Sigmoid colon (tissue), 7 donors: ENCODE measurements at regions of chr2 and their contacts with region 1.

Region 1: GRCh38 chr2:200864176-200864976 is at the start of gene CLK1:
- DNase-seq: peak; percentile 98
- H3K4me3 ChIP-seq: peak within 1 kb of the TSS; percentile 90 to 100 (median 96)
- H3K27ac ChIP-seq: peak within 1 kb of the TSS; percentile 100
- H3K4me1 ChIP-seq: peaks cover 0 to 35% (median 27%) of the 10 kb centered on the region in 4 donors
- H3K27me3 ChIP-seq: no peaks in the 10 kb centered on the region
- CTCF ChIP-seq: no peak
- EP300 ChIP-seq: peak in 1 of 4 donors; percentile 95
- POLR2A ChIP-seq: peak; percentile 99
- total RNA-seq, gene CLK1: 150 to 229 (median 195) TPM

Region 2: DNA sequence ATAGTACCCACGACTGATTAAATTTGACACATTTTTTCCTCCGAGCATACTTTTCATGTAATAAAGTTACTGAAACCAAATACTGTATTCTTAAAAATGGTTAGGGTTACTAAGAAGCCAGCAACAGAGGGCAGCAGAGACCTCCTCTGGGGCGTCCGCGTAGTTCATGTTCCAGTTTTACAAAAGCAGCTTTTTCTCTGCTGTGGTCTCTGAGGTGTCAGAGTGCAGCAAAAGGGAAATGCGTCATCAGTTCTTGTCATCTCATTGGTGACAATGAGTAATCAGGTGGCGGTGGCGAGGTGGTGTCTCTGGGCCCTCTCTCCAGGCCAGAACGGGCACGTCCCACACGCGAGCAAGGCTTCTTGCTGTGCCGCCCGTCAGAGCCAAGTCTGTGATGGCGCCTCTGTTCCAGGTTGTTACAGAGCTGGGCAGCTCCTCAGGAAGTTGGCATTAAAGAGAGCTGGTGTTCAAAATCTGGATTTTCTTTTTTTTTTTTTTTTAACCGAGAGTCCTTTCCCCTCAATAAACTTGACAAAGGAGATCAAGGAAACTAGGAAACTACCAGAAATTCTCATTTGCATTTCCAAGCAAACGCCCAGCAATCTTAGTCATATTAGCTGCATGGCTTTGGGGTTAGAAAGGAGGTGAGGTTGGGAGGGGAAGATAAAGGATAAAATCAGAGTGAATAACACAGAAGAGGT is 151.2 kb before region 1 on chr2:
- intact Hi-C with region 1: loop called (anchors 5 kb)
- DNase-seq: peak; percentile 89
- H3K4me3 ChIP-seq: peak overlapping the region; percentile 28 to 50 (median 47)
- H3K27ac ChIP-seq: peak overlapping the region; percentile 50 to 74 (median 67)
- H3K4me1 ChIP-seq: peaks cover 0 to 5% (median 2%) of the 10 kb centered on the region in 4 donors
- H3K27me3 ChIP-seq: no peaks in the 10 kb centered on the region
- CTCF ChIP-seq: peak in 3 of 4 experiments; percentile 59 to 77 (median 63)
- EP300 ChIP-seq: no peak
- POLR2A ChIP-seq: peak in 1 of 2 donors; percentile 30

Region 3: GRCh38 chr2:200811336-200812121 is 52.8 kb before region 1 on chr2 and contains the start of gene BZW1:
- intact Hi-C with region 1: loop called (anchors 1 kb)
- DNase-seq: peak; percentile 99
- H3K4me3 ChIP-seq: peak within 1 kb of the TSS; percentile 76 to 99 (median 98)
- H3K27ac ChIP-seq: peak within 1 kb of the TSS; percentile 99 to 100 (median 100)
- H3K4me1 ChIP-seq: peaks cover 0 to 38% (median 35%) of the 10 kb centered on the region in 4 donors
- H3K27me3 ChIP-seq: no peaks in the 10 kb centered on the region
- CTCF ChIP-seq: no peak
- EP300 ChIP-seq: no peak
- POLR2A ChIP-seq: peak; percentile 94 to 96
- total RNA-seq, gene BZW1: 77.9 to 119 (median 100) TPM

Region 4: GRCh38 chr2:200888704-200889625 is 24.6 kb after region 1 on chr2 and contains the starts of genes NIF3L1 and PPIL3:
- intact Hi-C with region 1: loop called (anchors 1 kb)
- DNase-seq: peak; percentile 98
- H3K4me3 ChIP-seq: peak within 1 kb of the TSS; percentile 62 to 76 (median 73)
- H3K27ac ChIP-seq: peak within 1 kb of the TSS; percentile 93 to 96 (median 94)
- H3K4me1 ChIP-seq: peaks cover 0 to 33% (median 20%) of the 10 kb centered on the region in 4 donors
- H3K27me3 ChIP-seq: no peaks in the 10 kb centered on the region
- CTCF ChIP-seq: no peak
- EP300 ChIP-seq: peak in 2 of 4 donors; percentile 19 to 35
- POLR2A ChIP-seq: peak in 1 of 2 donors; percentile 49
- total RNA-seq, gene NIF3L1: 9.8 to 23.5 (median 15.9) TPM
- total RNA-seq, gene PPIL3: 11.8 to 116 (median 22.2) TPM

Region 5: GRCh38 chr2:200963124-200963917 is 98.9 kb after region 1 on chr2 and contains the start of gene ORC2:
- intact Hi-C with region 1: loop called (anchors 5 kb)
- DNase-seq: peak; percentile 97
- H3K4me3 ChIP-seq: peak within 1 kb of the TSS; percentile 71 to 98 (median 91)
- H3K27ac ChIP-seq: peak within 1 kb of the TSS; percentile 84 to 96 (median 90)
- H3K4me1 ChIP-seq: peaks cover 0 to 28% (median 16%) of the 10 kb centered on the region in 4 donors
- H3K27me3 ChIP-seq: no peaks in the 10 kb centered on the region
- CTCF ChIP-seq: peak; percentile 61 to 78 (median 70)
- EP300 ChIP-seq: no peak
- POLR2A ChIP-seq: no peak
- total RNA-seq, gene ORC2: 12.9 to 19.3 (median 15.7) TPM

Region 6: GRCh38 chr2:201642579-201643215 is 778.3 kb after region 1 on chr2:
- intact Hi-C with region 1: loop called (anchors 10 kb)
- DNase-seq: peak; percentile 89
- H3K4me3 ChIP-seq: peak overlapping the region; percentile 71 to 84 (median 76)
- H3K27ac ChIP-seq: peak overlapping the region; percentile 93 to 96 (median 94)
- H3K4me1 ChIP-seq: peaks cover 0 to 20% (median 18%) of the 10 kb centered on the region in 4 donors
- H3K27me3 ChIP-seq: no peaks in the 10 kb centered on the region
- CTCF ChIP-seq: no peak
- EP300 ChIP-seq: peak in 1 of 4 donors; percentile 2
- POLR2A ChIP-seq: peak; percentile 48 to 80